Activated T-helper 1 cell treated with anti-CD3 and anti-CD28 coated beads, Interleukin-12 subunit alpha, Interleukin-12 subunit beta, Interleukin-2, Interleukin-4 antibody, amounts not matched to agents 30 ng/mL and 10 ng/mL and 1 ng/mL, durations not matched to agents 14 hours and 24 hours and 36 hours (primary cell): ENCODE measurements at regions of chr10 and their contacts with region 1.

Region 1: DNA sequence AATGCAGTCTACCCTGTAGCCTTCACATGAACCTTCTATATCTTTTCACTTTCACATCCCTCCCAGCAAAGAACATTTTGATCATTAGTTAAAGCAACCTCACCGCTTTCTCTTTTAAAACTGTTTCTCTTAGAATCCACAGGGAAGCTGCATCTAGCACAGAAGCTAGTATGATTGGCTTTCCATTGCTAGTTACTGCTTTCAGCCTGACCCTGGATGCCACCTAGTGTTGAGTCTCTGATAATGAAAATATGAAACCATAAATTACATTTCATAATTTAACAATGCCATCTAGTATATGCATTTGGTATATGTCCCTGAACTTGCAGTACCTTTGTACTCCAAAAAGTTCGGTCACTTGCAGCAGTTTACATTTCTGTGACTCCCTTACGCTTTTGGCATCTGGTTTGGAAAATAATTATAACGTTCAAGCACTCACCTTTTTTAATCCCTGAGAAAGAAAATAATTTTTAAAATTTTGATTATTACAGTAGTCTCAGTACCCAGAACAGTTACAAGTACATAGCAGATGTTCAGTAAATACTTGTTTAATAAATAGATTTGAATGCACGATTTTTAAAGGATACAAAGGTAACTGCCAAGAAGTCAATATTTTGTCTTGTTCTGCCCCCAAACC is 22.7 kb downstream of the CISD1 start:
- DNase-seq: no peak
- H3K4me3 Mint-ChIP-seq: no peak overlapping the region
- H3K27ac Mint-ChIP-seq: no peak overlapping the region
- H3K4me1 Mint-ChIP-seq: peaks cover 5% of the 10 kb centered on the region
- H3K27me3 Mint-ChIP-seq: no peaks in the 10 kb centered on the region

Region 2: GRCh38 chr10:58064714-58065528 is 226.7 kb before region 1 on chr10:
- intact Hi-C with region 1: no loop called
- DNase-seq: no peak
- H3K4me3 Mint-ChIP-seq: no peak overlapping the region
- H3K27ac Mint-ChIP-seq: no peak overlapping the region
- H3K4me1 Mint-ChIP-seq: no peaks in the 10 kb centered on the region
- H3K27me3 Mint-ChIP-seq: peaks cover 6% of the 10 kb centered on the region

Region 3: GRCh38 chr10:58177362-58177947 is 114.2 kb before region 1 on chr10:
- intact Hi-C with region 1: loop called (anchors 1 kb)
- DNase-seq: no peak
- H3K4me3 Mint-ChIP-seq: no peak overlapping the region
- H3K27ac Mint-ChIP-seq: no peak overlapping the region
- H3K4me1 Mint-ChIP-seq: no peaks in the 10 kb centered on the region
- H3K27me3 Mint-ChIP-seq: peaks cover 3% of the 10 kb centered on the region

Region 4: DNA sequence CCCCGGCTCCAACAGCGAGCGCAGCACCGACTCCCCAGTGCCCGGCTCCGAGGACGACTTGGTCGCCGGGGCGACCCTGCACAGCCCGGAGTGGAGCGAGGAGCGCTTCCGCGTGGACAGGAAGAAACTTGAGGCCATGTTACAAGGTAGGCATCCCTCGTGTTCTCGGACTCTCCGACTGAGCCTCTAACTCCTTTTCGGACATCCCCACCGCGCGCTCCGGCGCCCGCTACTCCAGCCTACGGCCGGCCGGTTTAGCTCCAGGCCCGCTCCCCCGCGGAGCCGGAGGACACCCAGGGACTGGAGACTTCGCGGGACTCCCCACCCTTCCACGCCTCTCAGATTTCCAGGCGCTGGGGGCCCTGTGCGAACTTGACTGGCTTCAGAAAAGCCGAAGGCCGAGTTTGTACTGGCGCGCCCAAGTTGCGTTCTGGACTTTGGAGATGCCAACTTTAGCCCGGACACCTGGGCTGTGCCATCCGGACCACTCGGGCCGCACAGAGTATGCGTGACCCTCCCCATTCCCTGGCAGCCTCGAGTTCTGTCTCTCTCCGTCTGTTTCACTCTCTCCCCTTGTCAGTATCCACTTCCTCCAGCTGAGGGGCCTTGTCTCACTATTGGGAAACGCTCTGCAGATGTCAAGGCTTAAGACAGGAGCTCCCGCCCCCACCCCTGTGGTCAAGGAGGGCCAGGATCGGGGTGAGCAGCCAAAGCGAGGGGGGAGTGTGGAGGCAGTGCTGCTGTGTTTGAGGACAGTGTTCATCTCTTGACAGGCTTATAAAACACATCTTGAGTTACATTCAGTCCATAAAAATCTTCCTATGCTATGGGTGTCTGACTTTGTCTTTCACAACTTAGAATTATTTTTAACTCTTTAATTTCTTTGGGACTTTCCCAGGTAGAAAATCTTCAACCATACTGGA is 221.8 kb after region 1 on chr10:
- intact Hi-C with region 1: no loop called
- DNase-seq: no peak
- H3K4me3 Mint-ChIP-seq: peak overlapping the region; percentile 48
- H3K27ac Mint-ChIP-seq: no peak overlapping the region
- H3K4me1 Mint-ChIP-seq: peaks cover 9% of the 10 kb centered on the region
- H3K27me3 Mint-ChIP-seq: peaks cover 30% of the 10 kb centered on the region